Activated T-helper 2 cell treated with anti-CD3 and anti-CD28 coated beads, Interferon-gamma antibody, Interleukin-2, Interleukin-4, amounts not matched to agents 10 μg/mL and 5 μg/mL and 100 μg/mL, durations not matched to agents 14 hours and 24 hours and 36 hours (primary cell): ENCODE measurements at regions of chr9 and their contacts with region 1.

Region 1: GRCh38 chr9:68653141-68653595 is 51.9 kb upstream of the PIP5K1B start:
- DNase-seq: peak; percentile 22
- H3K4me3 Mint-ChIP-seq: peak overlapping the region; percentile 18
- H3K27ac Mint-ChIP-seq: peak overlapping the region; percentile 95
- H3K4me1 Mint-ChIP-seq: peaks cover 64% of the 10 kb centered on the region
- H3K27me3 Mint-ChIP-seq: no peaks in the 10 kb centered on the region

Region 2: DNA sequence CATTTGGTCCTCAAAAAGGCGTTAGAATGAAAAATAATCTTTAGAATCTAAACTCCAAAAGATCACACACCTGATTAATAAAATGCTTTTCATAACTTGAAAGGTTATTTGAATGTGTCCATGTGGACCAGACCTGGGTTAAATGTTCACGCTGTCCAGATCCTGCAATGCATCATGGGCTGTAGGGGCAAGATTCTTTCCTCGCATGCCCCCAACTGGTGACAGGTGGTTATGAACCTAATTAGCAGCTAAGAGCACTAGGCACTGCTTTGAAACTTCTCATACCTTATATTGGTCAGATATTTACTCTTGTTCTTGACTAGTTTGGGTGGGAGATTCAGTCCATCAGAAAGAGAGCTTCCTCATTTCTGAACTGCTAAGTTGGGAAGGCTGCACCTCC is 32.6 kb after region 1 on chr9:
- intact Hi-C with region 1: loop called (anchors 1 kb)
- DNase-seq: no peak
- H3K4me3 Mint-ChIP-seq: no peak overlapping the region
- H3K27ac Mint-ChIP-seq: no peak overlapping the region
- H3K4me1 Mint-ChIP-seq: peaks cover 36% of the 10 kb centered on the region
- H3K27me3 Mint-ChIP-seq: peaks cover 12% of the 10 kb centered on the region

Region 3: GRCh38 chr9:68697851-68698250 is 44.7 kb after region 1 on chr9:
- intact Hi-C with region 1: no loop called
- DNase-seq: no peak
- H3K4me3 Mint-ChIP-seq: no peak overlapping the region
- H3K27ac Mint-ChIP-seq: no peak overlapping the region
- H3K4me1 Mint-ChIP-seq: peaks cover 7% of the 10 kb centered on the region
- H3K27me3 Mint-ChIP-seq: peaks cover 69% of the 10 kb centered on the region

Region 4: DNA sequence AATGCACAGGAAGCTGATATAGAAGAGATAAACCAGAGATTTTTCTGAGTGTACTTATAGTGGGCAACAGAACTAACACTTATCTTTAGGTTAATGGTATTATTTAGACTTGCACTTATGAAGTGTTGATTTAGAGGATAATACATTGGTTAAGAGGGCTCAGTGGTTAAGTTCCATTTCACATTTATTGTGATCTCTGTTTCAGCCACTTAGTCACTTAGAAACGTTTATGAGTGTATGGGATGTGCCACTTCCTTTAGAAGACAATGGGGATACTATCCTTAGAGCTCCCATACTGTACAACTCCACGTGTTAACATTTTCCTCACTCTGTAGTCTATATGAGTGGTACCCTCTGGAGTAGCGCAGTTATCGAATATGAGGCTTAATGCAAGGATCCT is 109.4 kb after region 1 on chr9:
- intact Hi-C with region 1: loop called (anchors 5 kb)
- DNase-seq: no peak
- H3K4me3 Mint-ChIP-seq: no peak overlapping the region
- H3K27ac Mint-ChIP-seq: no peak overlapping the region
- H3K4me1 Mint-ChIP-seq: peaks cover 30% of the 10 kb centered on the region
- H3K27me3 Mint-ChIP-seq: peaks cover 3% of the 10 kb centered on the region

Region 5: DNA sequence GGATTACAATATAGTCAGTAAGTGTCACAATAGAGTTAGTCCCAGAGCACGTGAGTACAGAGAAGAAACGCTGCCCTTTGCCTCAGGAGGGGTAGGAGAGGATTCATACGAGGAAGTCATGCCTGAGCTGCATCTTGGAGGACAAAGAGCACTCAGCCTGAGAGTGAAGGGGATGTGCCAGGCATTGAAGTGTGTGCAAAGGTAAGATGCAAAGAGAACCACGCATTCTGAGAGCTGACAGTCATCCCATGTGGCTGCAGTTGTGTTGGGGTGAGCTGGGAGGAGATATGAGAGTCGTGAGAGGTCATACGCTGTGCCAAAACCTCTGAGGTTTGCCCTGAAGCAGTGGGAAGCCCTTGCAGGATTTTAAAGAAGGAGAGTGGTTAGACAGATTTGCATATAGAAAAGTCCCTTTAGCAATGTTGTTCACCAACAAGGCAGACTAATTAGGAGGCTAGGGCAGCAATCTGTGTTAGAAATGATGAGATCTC is 149.4 kb after region 1 on chr9:
- intact Hi-C with region 1: loop called (anchors 2 kb)
- DNase-seq: peak; percentile 13
- H3K4me3 Mint-ChIP-seq: no peak overlapping the region
- H3K27ac Mint-ChIP-seq: no peak overlapping the region
- H3K4me1 Mint-ChIP-seq: peaks cover 21% of the 10 kb centered on the region
- H3K27me3 Mint-ChIP-seq: no peaks in the 10 kb centered on the region

Region 6: DNA sequence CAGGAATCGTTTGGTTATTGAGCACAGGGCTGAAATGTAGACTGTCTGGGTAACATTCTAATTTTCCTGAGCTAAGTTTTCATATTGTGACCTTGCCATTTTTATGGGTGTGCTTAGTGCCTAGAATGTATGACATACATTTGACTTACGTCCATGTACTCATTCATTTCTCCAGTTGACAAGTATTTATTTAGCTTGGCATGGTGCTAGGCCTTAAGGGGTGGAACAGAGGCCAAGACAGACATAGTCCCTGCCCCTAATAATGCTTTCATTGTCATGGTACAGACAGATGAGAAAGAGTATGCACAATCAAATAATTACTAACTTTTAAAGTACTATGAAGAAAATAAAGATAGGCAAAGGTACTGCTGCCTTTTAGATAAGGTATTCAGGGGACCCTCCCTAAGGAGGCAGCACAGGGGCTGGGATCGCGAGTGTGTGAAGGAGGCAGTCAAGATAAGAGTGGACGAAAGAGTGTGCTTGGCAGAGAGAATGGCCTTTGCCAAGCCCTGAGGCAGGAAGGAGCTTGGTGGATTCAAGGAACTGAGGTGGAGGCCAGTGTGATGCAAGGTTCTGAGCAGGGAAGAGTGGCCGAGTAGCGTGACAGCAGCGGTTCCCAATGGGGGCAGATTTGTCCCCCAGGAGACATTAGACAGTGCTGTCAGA is 179.8 kb after region 1 on chr9:
- intact Hi-C with region 1: no loop called
- DNase-seq: no peak
- H3K4me3 Mint-ChIP-seq: no peak overlapping the region
- H3K27ac Mint-ChIP-seq: no peak overlapping the region
- H3K4me1 Mint-ChIP-seq: no peaks in the 10 kb centered on the region
- H3K27me3 Mint-ChIP-seq: no peaks in the 10 kb centered on the region

Region 7: DNA sequence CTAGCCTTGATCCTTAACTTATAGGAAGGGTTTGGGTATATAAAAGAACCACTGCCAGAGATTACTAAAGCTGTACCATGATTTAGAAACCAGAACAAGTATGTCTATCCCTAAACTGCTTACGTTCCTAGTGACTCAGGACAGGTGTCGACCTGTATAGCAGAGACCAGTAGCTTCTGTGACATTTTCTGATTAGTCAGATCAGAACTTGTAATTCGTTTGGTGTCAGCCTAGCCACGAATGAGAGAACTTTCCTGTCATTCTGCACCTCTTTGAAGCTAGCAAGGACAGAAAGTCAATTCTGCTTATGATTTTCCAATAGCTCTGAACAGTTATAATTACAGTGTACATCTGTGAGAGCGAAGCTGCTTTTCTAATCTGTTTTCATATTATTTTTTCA is 321.3 kb after region 1 on chr9:
- intact Hi-C with region 1: loop called (anchors 1 kb)
- DNase-seq: peak; percentile 28
- H3K4me3 Mint-ChIP-seq: peak overlapping the region; percentile 64
- H3K27ac Mint-ChIP-seq: peak overlapping the region; percentile 89
- H3K4me1 Mint-ChIP-seq: peaks cover 66% of the 10 kb centered on the region
- H3K27me3 Mint-ChIP-seq: no peaks in the 10 kb centered on the region

Region 8: GRCh38 chr9:69174616-69175463 is 521.7 kb after region 1 on chr9:
- intact Hi-C with region 1: loop called (anchors 5 kb)
- DNase-seq: no peak
- H3K4me3 Mint-ChIP-seq: peak overlapping the region; percentile 86
- H3K27ac Mint-ChIP-seq: peak overlapping the region; percentile 74
- H3K4me1 Mint-ChIP-seq: peaks cover 64% of the 10 kb centered on the region
- H3K27me3 Mint-ChIP-seq: peaks cover 10% of the 10 kb centered on the region